Endothelial cell of umbilical vein (primary cell): ENCODE measurements at regions of chr1 and their contacts with region 1.

Region 1: DNA sequence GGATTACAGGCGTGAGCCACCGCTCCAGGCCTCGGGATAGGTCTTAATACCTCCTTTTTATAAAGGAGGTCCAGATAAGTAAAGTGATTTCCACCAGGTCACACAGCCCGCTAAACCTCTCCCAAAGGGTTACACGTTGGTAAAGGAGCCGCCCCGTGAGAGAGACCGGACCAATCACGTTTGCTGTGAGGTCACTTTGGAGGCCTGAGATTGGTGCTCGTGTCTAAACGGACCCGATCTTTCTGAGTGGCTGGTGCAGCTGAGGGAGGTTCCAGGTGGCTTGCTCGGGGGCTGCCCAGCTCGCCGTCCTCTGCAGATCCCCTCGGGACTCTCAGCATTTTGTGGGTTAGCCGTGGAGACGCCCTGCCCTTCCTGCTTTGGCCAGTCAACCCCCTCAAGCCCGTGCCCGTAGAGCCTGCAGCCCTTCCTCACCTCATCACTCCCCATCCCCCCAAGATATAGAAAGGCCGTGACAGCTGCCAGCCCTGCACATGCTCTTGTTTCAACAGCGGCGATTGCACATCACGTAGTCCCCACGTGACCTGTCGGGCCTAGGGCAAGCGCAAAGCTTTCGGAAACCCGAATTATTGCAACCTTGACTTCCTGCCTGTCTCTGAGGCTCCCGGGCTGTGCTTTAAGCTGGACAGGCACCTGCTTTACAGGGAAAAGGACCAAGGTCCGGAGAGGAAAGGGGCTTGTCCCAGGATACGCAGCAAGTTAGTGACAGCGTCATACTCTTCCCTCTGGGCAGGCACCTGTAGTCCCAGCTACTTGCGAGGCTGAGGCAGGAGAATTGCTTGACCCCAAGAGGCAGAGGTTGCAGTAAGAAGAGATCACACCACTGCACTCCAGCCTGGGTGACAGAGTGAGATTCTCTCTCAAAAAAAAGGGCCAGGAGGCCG is 5.0 kb upstream of the COA7 start:
- DNase-seq: peak; percentile 89
- H3K4me3 ChIP-seq: peak overlapping the region; percentile 15 to 48 (median 32)
- H3K27ac ChIP-seq: peak overlapping the region; percentile 2
- H3K4me1 ChIP-seq: peaks cover 8% of the 10 kb centered on the region
- H3K27me3 ChIP-seq: peaks cover 0 to 9% of the 10 kb centered on the region in 2 experiments
- CTCF ChIP-seq: no peak
- POLR2A ChIP-seq: peak; percentile 54

Region 2: DNA sequence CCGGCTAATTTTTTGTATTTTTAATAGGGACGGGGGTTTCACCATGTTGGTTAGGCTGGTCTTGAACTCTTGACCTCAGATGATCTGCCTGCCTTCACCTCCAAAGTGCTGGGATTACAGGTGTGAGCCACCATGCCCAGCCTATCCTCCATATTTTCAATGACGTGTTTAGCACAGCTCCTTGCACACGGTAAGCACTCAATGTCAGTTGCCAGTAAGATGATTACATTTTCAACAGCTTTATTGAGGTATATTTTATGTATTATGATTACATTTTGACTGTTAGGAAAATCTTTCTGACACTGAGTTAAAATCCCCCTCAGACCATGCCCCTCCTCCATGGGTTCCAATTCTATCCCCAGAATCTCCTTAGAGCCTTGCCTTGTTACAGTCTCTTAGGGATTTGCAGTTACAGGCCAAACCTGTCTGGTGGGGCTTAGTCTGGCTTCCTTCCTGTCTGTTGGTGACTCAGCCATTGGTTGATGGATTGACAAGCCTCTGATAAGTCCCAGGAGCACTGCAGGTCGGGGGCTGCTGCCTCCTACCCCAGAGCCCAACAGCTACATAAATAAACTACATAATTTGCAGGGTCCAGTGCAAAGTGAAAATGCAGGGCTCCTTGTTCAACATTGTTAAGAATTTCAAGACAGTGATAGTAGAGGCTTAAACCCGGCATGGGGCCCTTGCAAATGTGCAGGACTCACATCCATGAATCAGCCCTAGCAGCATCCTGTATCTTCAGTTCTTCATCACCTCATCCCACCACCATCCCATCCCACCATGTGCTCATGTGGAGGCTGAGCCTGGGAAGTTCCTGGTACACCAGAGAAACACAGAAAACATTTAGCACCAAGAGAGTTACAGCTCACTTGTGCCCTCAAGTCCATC is 28.4 kb before region 1 on chr1:
- CTCF ChIA-PET with region 1: no interaction called
- POLR2A ChIA-PET with region 1: no interaction called
- dilution Hi-C with region 1: no loop called
- intact Hi-C with region 1: no loop called
- DNase-seq: peak; percentile 53
- H3K4me3 ChIP-seq: no peak overlapping the region
- H3K27ac ChIP-seq: peak overlapping the region; percentile 50
- H3K4me1 ChIP-seq: peaks cover 11% of the 10 kb centered on the region
- H3K27me3 ChIP-seq: no peaks in the 10 kb centered on the region
- CTCF ChIP-seq: no peak
- POLR2A ChIP-seq: no peak

Region 3: DNA sequence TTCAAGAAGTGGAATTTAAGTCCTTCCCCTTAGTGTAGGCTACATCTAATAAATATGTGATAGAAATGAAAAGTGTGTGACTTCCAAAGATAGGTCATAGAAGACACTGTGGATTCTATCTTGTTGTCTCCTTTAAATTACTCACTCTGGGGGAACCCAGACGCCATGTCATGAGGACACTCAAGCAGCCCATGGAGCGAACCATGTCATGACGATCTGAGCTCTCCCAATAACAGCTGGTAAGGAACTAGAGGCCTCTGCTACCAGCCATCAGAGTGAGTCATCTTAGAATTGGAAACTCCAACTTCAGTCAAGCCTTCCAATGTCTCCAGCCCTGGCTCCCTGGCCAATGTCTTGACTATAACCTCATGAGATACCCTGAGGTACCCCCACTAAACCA is 11.3 kb before region 1 on chr1:
- CTCF ChIA-PET with region 1: no interaction called
- POLR2A ChIA-PET with region 1: no interaction called
- dilution Hi-C with region 1: no loop called
- intact Hi-C with region 1: no loop called
- DNase-seq: no peak
- H3K4me3 ChIP-seq: no peak overlapping the region
- H3K27ac ChIP-seq: no peak overlapping the region
- H3K4me1 ChIP-seq: no peaks in the 10 kb centered on the region
- H3K27me3 ChIP-seq: no peaks in the 10 kb centered on the region
- CTCF ChIP-seq: no peak
- POLR2A ChIP-seq: no peak

Region 4: DNA sequence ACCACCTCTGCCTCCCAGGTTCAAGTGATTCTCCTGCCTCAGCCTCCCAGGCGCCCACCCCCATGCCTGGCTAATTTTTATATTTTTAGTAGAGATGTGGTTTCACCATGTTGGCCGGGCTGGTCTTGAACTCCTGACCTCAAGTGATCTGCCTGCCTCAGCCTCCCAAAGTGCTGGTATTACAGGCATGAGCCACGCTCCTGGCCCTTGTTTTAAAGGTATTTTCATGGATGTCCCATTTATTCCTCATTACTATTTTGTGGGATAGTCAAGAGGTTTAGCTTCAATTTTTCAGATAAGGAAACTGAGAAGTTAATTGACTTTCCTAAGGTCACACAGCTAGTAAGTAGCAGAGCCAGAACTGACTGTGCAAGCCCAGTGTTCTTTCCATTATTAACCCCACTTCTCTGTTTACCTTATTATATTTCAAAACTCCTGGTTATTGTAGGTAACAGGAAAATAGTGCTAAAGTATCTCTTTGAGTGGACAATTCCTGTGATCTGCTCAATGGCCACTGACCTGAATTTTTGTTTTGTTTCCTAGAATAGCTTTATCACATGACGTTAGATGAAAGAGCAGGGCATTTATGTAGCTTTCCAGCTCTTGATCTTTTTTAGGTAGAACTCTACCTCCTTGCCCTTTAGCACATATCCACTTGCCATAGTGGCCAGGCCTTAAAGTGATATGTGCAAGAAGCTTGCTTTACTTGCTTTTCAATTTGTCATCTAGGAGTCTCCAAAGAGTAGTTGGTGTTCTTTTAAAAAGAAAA is 36.7 kb after region 1 on chr1:
- CTCF ChIA-PET with region 1: no interaction called
- POLR2A ChIA-PET with region 1: no interaction called
- dilution Hi-C with region 1: no loop called
- intact Hi-C with region 1: no loop called
- DNase-seq: no peak
- H3K4me3 ChIP-seq: no peak overlapping the region
- H3K27ac ChIP-seq: no peak overlapping the region
- H3K4me1 ChIP-seq: no peaks in the 10 kb centered on the region
- H3K27me3 ChIP-seq: no peaks in the 10 kb centered on the region
- CTCF ChIP-seq: no peak
- POLR2A ChIP-seq: no peak

Region 5: DNA sequence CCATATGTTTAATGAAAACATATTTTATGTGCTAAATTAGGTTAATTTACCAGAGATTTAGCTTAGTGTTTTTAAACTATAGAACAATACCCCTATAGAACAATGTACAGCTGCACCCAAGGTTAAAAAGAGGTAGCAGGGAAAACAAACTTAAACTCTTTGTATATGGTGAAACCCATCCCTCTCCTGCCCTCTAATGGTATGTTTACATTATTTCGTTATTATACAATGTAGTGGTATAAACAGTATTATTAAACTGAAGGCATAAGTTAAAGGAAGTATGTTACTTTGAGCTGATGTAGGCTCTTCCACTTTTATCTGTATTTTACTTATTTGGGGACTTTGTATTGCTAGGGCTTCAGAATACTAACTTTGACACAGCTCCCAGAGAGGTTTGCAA is 122.7 kb after region 1 on chr1:
- CTCF ChIA-PET with region 1: interaction called, 9 read pairs
- POLR2A ChIA-PET with region 1: no interaction called
- dilution Hi-C with region 1: no loop called
- intact Hi-C with region 1: loop called (anchors 1 kb)
- DNase-seq: peak; percentile 25
- H3K4me3 ChIP-seq: no peak overlapping the region
- H3K27ac ChIP-seq: no peak overlapping the region
- H3K4me1 ChIP-seq: no peaks in the 10 kb centered on the region
- H3K27me3 ChIP-seq: no peaks in the 10 kb centered on the region
- CTCF ChIP-seq: no peak
- POLR2A ChIP-seq: no peak

Region 6: DNA sequence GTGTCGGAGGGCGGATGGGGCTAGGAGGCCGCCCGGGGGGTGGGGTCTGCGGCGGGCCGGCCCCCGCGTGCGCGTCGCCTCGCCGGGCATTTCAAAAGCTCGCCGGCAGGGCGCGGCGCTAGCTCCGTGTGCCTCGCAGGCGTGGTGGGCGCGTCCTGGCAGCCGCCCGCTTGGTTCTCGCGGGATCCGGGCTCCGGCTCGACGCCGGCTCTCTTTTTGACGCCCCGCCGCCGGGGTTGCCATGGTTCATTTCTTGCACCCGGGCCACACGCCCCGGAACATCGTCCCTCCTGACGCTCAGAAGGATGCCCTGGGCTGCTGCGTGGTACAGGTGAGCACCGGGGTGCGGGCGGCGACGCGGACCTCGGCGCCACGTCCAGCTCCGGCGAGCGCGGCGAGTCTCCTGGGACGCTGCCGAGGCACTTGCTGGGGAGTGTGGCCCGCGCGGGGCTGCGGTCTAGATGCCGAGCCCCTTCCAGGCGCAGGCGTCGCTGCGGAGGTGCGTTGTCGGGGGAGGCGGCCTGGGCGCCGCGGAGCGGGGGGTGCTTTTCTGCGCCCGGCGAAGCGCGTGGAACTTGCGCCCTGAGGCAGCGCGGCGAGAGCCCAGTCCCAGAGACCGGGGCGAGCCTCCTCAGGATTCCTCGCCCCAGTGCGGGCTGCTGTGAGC is 139.6 kb after region 1 on chr1 and contains the start of gene ZYG11A:
- CTCF ChIA-PET with region 1: interaction called, 4 read pairs
- POLR2A ChIA-PET with region 1: no interaction called
- dilution Hi-C with region 1: no loop called
- intact Hi-C with region 1: loop called (anchors 5 kb)
- DNase-seq: peak; percentile 81
- H3K4me3 ChIP-seq: peak within 1 kb of the TSS; percentile 28 to 76 (median 62)
- H3K27ac ChIP-seq: no peak within 1 kb of the TSS
- H3K4me1 ChIP-seq: no peaks in the 10 kb centered on the region
- H3K27me3 ChIP-seq: no peaks in the 10 kb centered on the region
- CTCF ChIP-seq: peak in 1 of 2 donors; percentile 44
- POLR2A ChIP-seq: no peak
- total RNA-seq, gene ZYG11A: 1.3 and 2.1 TPM in 2 replicates

Region 7: GRCh38 chr1:52920791-52921291 is 217.7 kb after region 1 on chr1:
- CTCF ChIA-PET with region 1: interaction called, 3 read pairs
- POLR2A ChIA-PET with region 1: no interaction called
- dilution Hi-C with region 1: no loop called
- intact Hi-C with region 1: loop called (anchors 5 kb)
- DNase-seq: peak; percentile 3
- H3K4me3 ChIP-seq: peak overlapping the region; percentile 20 to 56 (median 48)
- H3K27ac ChIP-seq: no peak overlapping the region
- H3K4me1 ChIP-seq: no peaks in the 10 kb centered on the region
- H3K27me3 ChIP-seq: no peaks in the 10 kb centered on the region
- CTCF ChIP-seq: no peak
- POLR2A ChIP-seq: no peak